Heart left ventricle (tissue), 16 donors: ENCODE measurements at regions of chr17 and their contacts with region 1.

Region 1: DNA sequence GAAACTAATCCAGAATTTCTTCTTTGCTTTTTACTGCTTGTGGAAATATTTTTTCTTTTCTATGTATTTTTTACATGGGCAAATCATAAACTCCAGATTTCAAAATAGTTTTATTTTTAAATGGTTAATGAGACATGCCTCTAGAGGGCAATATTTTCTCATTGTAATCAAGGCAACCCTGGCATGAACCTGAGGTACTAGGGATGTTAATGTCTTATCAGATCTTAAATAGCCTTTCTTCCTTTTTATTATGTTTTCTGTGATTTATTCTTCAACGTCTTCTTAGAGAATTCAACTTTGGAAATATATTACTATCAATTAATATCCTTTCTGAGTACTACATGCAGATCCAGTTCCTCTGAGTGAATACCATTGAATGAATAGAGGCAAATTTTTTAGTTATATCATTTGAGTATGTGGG is 324.7 kb downstream of the BCAS3 start:
- DNase-seq: no peak
- ATAC-seq: peak in 1 of 4 donors; percentile 56
- H3K4me3 ChIP-seq: no peak overlapping the region
- H3K27ac ChIP-seq: peak overlapping the region in 3 of 12 donors; percentile 18 to 20 (median 20)
- H3K4me1 ChIP-seq: peaks cover 0 to 9% (median 0%) of the 10 kb centered on the region in 12 donors
- H3K27me3 ChIP-seq: no peaks in the 10 kb centered on the region
- CTCF ChIP-seq: peak; percentile 19 to 71 (median 57)
- POLR2A ChIP-seq: no peak

Region 2: GRCh38 chr17:60901806-60902205 is 100.5 kb before region 1 on chr17:
- intact Hi-C with region 1: no loop called
- DNase-seq: no peak
- ATAC-seq: no peak
- H3K4me3 ChIP-seq: no peak overlapping the region
- H3K27ac ChIP-seq: peak overlapping the region in 2 of 12 donors; percentile 41 to 53
- H3K4me1 ChIP-seq: no peaks in the 10 kb centered on the region
- H3K27me3 ChIP-seq: no peaks in the 10 kb centered on the region
- CTCF ChIP-seq: no peak
- POLR2A ChIP-seq: no peak

Region 3: GRCh38 chr17:61251939-61252896 is 249.9 kb after region 1 on chr17:
- intact Hi-C with region 1: loop called in 1 of 10 experiments (anchors 10 kb)
- DNase-seq: peak; percentile 91 to 95 (median 93)
- ATAC-seq: peak; percentile 93 to 97 (median 95)
- H3K4me3 ChIP-seq: no peak overlapping the region
- H3K27ac ChIP-seq: peak overlapping the region; percentile 52 to 85 (median 68)
- H3K4me1 ChIP-seq: peaks cover 0 to 59% (median 32%) of the 10 kb centered on the region in 12 donors
- H3K27me3 ChIP-seq: no peaks in the 10 kb centered on the region
- CTCF ChIP-seq: no peak
- POLR2A ChIP-seq: no peak

Region 4: DNA sequence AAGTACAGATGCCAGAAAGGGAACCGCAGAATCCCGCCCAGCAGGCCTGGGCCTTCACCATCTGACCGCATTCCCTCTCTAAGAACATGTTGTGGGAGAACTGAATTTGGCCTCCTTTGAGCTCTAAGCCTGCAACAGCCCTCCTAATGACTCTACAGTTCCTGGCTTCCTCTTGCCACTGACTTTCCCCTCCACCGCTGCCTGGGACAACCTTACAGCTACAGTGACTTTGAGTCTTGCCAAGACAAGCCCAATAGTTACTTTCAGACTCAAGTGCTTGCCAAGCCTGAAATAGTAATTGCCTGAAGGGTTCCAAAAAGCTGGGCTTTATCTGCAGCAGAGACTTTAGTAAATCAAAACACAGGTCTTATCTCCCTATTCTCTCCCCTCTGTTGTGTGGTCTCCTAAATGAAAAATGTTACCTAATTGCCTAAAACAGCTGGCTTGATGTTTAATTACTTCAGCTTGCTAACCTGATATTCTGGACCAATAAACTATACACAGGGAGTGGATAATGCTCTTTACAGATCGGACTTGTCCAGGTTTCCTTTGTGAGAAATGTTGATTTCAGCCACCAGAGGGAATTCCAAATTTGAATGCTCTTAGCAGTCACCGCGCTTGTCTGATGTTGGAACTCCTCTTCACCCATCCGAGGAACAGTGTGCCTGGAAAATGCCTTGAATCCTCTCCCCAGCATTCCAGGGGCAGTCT is 312.2 kb after region 1 on chr17:
- intact Hi-C with region 1: loop called in 1 of 10 experiments (anchors 10 kb)
- DNase-seq: peak in 4 of 5 donors; percentile 60 to 78 (median 64)
- ATAC-seq: peak; percentile 88 to 95 (median 92)
- H3K4me3 ChIP-seq: no peak overlapping the region
- H3K27ac ChIP-seq: peak overlapping the region; percentile 41 to 81 (median 64)
- H3K4me1 ChIP-seq: peaks cover 7 to 31% (median 24%) of the 10 kb centered on the region in 12 donors
- H3K27me3 ChIP-seq: no peaks in the 10 kb centered on the region
- CTCF ChIP-seq: peak in 7 of 12 donors; percentile 11 to 37 (median 29)
- POLR2A ChIP-seq: no peak

Region 5: GRCh38 chr17:61389670-61390478 is 387.5 kb after region 1 on chr17:
- intact Hi-C with region 1: loop called (anchors 1 to 5 kb)
- DNase-seq: peak in 3 of 5 donors; percentile 57 to 79 (median 63)
- ATAC-seq: peak in 3 of 4 donors; percentile 43 to 77 (median 67)
- H3K4me3 ChIP-seq: peak overlapping the region in 1 of 12 donors; percentile 26
- H3K27ac ChIP-seq: peak overlapping the region in 9 of 12 donors; percentile 20 to 66 (median 45)
- H3K4me1 ChIP-seq: peaks cover 0 to 13% (median 6%) of the 10 kb centered on the region in 12 donors
- H3K27me3 ChIP-seq: peaks cover 0 to 2% (median 0%) of the 10 kb centered on the region in 9 donors
- CTCF ChIP-seq: peak; percentile 73 to 95 (median 86)
- POLR2A ChIP-seq: no peak

Region 6: GRCh38 chr17:61412143-61412859 is 410.0 kb after region 1 on chr17:
- intact Hi-C with region 1: loop called in 5 of 10 experiments (anchors 5 kb)
- DNase-seq: peak; percentile 77 to 93 (median 86)
- ATAC-seq: peak; percentile 14 to 80 (median 76)
- H3K4me3 ChIP-seq: peak overlapping the region; percentile 37 to 84 (median 65)
- H3K27ac ChIP-seq: peak overlapping the region; percentile 67 to 92 (median 83)
- H3K4me1 ChIP-seq: peaks cover 0 to 79% (median 40%) of the 10 kb centered on the region in 12 donors
- H3K27me3 ChIP-seq: peaks cover 0 to 57% (median 10%) of the 10 kb centered on the region in 9 donors
- CTCF ChIP-seq: peak; percentile 98 to 100 (median 99)
- POLR2A ChIP-seq: peak in 1 of 2 donors; percentile 41